GM12878 (cell line): ENCODE measurements at regions of chr1 and their contacts with region 1.

Region 1: GRCh38 chr1:65209005-65209885 is 61.2 kb downstream of the AK4 start:
- DNase-seq: no peak
- ATAC-seq: peak; percentile 74
- H3K4me3 ChIP-seq: no peak overlapping the region
- H3K27ac ChIP-seq: no peak overlapping the region
- H3K4me1 ChIP-seq: peaks cover 38% of the 10 kb centered on the region
- H3K27me3 ChIP-seq: no peaks in the 10 kb centered on the region
- CTCF ChIP-seq: peak; percentile 48 to 59 (median 51)
- EP300 ChIP-seq: no peak
- POLR2A ChIP-seq: no peak
- RAD21 ChIP-seq: peak; percentile 60

Region 2: DNA sequence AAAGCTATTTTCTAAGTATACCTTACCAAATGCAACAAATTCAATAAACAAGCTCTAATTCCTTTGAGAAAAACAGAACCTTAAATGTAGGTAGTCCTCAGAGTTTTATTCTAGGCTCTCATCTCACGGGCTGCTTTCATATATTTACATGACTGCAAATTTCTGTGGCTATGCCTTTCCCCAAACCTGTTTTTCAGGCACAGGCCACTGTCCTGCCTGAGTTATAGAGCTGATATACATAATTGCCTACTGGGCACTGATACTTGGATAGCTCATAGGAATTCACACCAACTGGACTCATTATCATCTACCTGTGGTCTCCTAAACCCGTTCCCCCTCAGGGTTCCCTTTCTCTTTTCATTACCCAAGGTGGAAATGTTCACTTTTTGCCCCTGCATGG is 485.5 kb before region 1 on chr1:
- CTCF ChIA-PET with region 1: no interaction called
- POLR2A ChIA-PET with region 1: no interaction called
- RAD21 ChIA-PET with region 1: no interaction called
- SMC1A ChIA-PET with region 1: no interaction called
- in situ Hi-C with region 1: no loop called
- intact Hi-C with region 1: no loop called
- DNase-seq: no peak
- ATAC-seq: no peak
- H3K4me3 ChIP-seq: no peak overlapping the region
- H3K27ac ChIP-seq: no peak overlapping the region
- H3K4me1 ChIP-seq: no peaks in the 10 kb centered on the region
- H3K27me3 ChIP-seq: no peaks in the 10 kb centered on the region
- CTCF ChIP-seq: no peak
- EP300 ChIP-seq: no peak
- POLR2A ChIP-seq: no peak
- RAD21 ChIP-seq: no peak

Region 3: DNA sequence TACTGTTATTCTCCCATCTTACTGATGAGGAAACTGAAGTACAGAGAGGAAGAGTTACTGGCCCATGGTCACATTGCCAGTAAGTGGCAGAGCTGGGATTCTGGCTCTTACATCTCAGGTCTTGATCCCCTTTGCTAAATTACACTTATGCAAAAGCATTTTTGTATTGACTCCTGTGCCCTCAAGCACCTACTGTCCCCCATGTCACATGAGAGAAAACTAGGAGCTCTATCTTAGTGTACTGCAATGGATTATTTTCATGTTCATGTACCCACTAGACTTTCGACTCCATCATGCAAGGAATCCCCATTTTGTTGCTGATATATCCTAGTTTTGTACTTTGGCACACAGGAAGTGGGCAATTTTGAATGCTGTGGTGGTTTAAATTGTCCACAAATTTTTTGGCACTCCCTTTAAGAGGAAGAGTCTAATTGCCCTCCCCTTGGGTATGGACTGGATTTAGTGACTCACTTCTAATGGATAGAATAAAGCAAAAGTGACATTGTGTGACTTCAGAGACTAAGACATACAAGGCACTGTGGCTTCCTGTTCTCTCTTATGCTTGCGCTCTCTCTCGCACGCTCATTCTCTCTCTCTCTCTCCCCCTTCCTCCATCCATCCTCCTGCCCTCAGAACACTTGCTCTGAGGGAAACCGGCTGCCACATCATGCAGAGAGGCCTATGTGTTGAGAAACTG is 199.4 kb before region 1 on chr1:
- CTCF ChIA-PET with region 1: no interaction called
- POLR2A ChIA-PET with region 1: no interaction called
- RAD21 ChIA-PET with region 1: no interaction called
- SMC1A ChIA-PET with region 1: no interaction called
- in situ Hi-C with region 1: no loop called
- intact Hi-C with region 1: no loop called
- DNase-seq: no peak
- ATAC-seq: no peak
- H3K4me3 ChIP-seq: no peak overlapping the region
- H3K27ac ChIP-seq: no peak overlapping the region
- H3K4me1 ChIP-seq: no peaks in the 10 kb centered on the region
- H3K27me3 ChIP-seq: peaks cover 0 to 8% of the 10 kb centered on the region in 2 experiments; a peak in 2 of 4 replicates
- CTCF ChIP-seq: no peak
- EP300 ChIP-seq: no peak
- POLR2A ChIP-seq: no peak
- RAD21 ChIP-seq: no peak

Region 4: GRCh38 chr1:65059930-65060538 is 149.2 kb before region 1 on chr1:
- CTCF ChIA-PET with region 1: interaction called, 63 read pairs
- POLR2A ChIA-PET with region 1: no interaction called
- RAD21 ChIA-PET with region 1: interaction called, 8 read pairs
- SMC1A ChIA-PET with region 1: interaction called, 18 read pairs
- in situ Hi-C with region 1: loop called (anchors 25 kb)
- intact Hi-C with region 1: loop called (anchors 1 kb)
- DNase-seq: no peak
- ATAC-seq: peak; percentile 46; the same call in 1 of the 3 replicates
- H3K4me3 ChIP-seq: no peak overlapping the region
- H3K27ac ChIP-seq: no peak overlapping the region
- H3K4me1 ChIP-seq: no peaks in the 10 kb centered on the region
- H3K27me3 ChIP-seq: no peaks in the 10 kb centered on the region
- CTCF ChIP-seq: peak; percentile 41 to 59 (median 48); a peak in 5 of 6 replicates
- EP300 ChIP-seq: no peak
- POLR2A ChIP-seq: no peak
- RAD21 ChIP-seq: peak; percentile 71

Region 5: DNA sequence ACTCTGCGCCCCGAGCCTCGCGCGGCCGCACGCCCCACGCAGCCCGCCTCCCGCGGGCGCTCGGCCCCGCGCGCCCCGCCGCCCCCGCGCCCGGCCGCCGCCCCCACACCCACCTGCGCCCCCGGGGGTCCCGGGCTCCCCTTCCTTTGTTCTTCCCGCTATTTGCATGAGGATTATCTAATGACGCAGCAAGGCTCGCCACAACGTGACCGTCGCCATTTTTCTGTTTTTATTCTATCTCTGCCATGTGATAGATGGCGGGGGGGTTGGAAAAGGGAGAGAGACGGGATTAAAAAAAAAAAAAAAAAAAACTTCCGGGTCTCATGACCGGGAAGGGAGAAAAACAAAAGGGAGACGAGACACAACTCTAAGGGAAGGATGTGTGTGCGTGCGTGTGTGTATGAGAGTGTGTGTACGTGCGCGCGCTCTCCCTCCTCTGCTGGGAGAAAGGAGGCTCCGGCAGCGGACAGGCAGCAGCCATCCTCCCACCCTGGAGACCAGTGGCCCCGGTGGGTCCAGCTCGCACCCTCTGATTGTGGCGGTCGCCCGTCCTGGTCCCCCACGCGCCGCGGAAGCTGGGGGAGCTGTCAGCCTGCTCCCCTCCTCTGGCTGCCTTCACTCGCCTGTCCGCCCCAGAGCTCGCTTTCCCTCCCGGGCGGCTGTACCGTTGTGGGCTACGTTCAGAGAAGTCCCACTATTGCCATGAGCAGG is 141.6 kb before region 1 on chr1:
- CTCF ChIA-PET with region 1: interaction called, 63 read pairs
- POLR2A ChIA-PET with region 1: no interaction called
- RAD21 ChIA-PET with region 1: interaction called, 8 read pairs
- SMC1A ChIA-PET with region 1: interaction called, 18 read pairs
- in situ Hi-C with region 1: loop called (anchors 25 kb)
- intact Hi-C with region 1: no loop called
- DNase-seq: no peak
- ATAC-seq: peak; percentile 65
- H3K4me3 ChIP-seq: peak overlapping the region; percentile 86
- H3K27ac ChIP-seq: peak overlapping the region; percentile 18; the same call in 1 of the 2 replicates
- H3K4me1 ChIP-seq: peaks cover 4% of the 10 kb centered on the region; the same call in 1 of the 2 replicates
- H3K27me3 ChIP-seq: peaks cover 3 to 4% of the 10 kb centered on the region in 2 experiments; a peak in 3 of 4 replicates
- CTCF ChIP-seq: no peak
- EP300 ChIP-seq: no peak
- POLR2A ChIP-seq: peak; percentile 56
- RAD21 ChIP-seq: no peak

Region 6: DNA sequence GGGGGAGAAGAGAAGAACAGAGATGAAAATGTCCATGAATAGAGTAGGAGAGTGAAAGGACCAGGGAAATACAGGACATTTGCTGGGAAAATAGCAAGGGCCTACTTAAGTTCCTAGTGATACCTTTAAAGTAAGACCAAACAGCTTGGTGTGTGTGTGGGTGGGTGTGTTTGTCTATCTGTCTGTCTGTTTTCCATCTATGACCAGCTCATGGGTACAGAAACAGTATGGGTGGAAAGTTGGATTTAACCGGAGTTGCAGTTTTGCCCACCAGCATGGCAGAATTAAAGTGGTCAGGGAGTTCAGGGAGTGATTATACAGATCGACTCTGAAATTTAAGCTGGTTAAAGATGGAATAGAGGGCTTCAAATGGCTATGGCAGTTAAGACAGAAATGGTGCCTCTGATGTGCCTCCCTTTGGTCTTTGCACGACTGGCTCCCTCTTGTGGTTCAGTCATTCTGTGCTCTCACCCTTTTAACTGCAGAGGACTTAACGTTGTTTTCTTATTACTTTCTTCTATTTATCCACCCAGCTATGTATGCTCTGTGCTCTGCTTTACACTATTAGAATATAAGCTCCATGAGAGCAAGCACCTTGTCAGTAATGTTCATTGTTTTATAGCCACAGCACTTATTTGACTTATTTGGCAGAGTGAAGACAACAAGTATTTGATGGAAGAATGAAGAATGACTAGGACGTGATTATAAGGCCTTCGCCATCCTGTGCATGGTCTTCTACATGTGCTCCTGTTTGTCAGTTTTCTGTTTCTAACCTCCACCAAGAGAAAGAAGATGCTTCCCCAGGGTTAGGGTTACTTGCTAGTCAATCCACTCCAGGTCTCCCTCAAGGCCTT is 133.9 kb before region 1 on chr1:
- CTCF ChIA-PET with region 1: interaction called, 24 read pairs
- POLR2A ChIA-PET with region 1: interaction called, 3 read pairs
- RAD21 ChIA-PET with region 1: interaction called, 3 read pairs
- SMC1A ChIA-PET with region 1: interaction called, 35 read pairs
- in situ Hi-C with region 1: loop called (anchors 25 kb)
- intact Hi-C with region 1: no loop called
- DNase-seq: no peak
- ATAC-seq: peak; percentile 95
- H3K4me3 ChIP-seq: no peak overlapping the region
- H3K27ac ChIP-seq: no peak overlapping the region
- H3K4me1 ChIP-seq: no peaks in the 10 kb centered on the region
- H3K27me3 ChIP-seq: no peaks in the 10 kb centered on the region; a peak in 1 of 4 replicates
- CTCF ChIP-seq: peak; percentile 72 to 84 (median 74)
- EP300 ChIP-seq: no peak
- POLR2A ChIP-seq: no peak
- RAD21 ChIP-seq: peak; percentile 67

Region 7: DNA sequence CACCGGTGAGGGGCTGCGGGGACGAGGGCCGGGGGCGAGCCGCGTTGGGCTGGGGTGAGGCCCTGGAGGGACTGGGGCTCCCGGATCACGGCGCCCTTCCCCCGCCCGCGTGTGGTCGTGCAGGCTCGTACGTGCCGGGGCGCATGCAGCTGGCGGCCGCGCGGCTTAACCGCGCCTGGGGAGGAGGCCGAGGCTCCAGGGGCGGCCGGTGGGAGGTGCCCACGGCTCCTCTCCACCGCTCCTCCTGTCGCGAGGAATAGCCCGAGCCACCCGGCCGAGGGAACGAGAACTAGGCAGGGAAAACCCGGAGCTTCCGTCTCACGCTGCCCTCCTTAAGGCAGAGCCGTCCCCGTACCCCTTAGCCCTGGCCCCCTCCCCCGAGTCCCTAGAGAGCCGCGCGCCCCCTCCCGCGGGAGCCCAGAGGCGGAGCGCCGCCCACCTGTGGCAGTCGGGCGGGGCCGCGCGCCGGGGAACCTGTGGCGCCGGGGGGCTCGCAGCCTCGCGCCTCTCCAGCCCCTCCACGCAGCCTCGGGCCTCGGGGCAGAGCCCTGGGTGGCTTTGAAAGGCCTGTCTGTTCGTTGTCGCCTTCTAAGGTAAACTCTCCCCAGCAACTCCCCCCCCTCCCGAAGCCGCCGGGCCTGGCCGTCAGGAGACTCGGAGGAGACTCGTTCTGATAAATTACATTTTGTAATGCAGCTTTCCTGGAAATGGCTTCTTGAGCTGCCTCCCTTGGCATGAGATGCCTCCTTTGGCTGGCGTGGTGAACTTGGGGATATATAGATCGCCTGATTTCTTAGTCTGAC is 60.5 kb before region 1 on chr1:
- CTCF ChIA-PET with region 1: interaction called, 15 read pairs
- POLR2A ChIA-PET with region 1: interaction called, 3 read pairs
- RAD21 ChIA-PET with region 1: interaction called, 6 read pairs
- SMC1A ChIA-PET with region 1: interaction called, 10 read pairs
- in situ Hi-C with region 1: no loop called
- intact Hi-C with region 1: no loop called
- DNase-seq: peak; percentile 45
- ATAC-seq: peak; percentile 66
- H3K4me3 ChIP-seq: peak overlapping the region; percentile 87
- H3K27ac ChIP-seq: peak overlapping the region; percentile 55
- H3K4me1 ChIP-seq: peaks cover 5% of the 10 kb centered on the region; the same call in 1 of the 2 replicates
- H3K27me3 ChIP-seq: peaks cover 0 to 4% of the 10 kb centered on the region in 2 experiments; a peak in 1 of 4 replicates
- CTCF ChIP-seq: no peak
- EP300 ChIP-seq: no peak
- POLR2A ChIP-seq: peak; percentile 79
- RAD21 ChIP-seq: no peak